Transverse colon (tissue), 4 donors: ENCODE measurements at regions of chr11 and their contacts with region 1.

Region 1: GRCh38 chr11:87037450-87038234 is at the start of gene TMEM135:
- DNase-seq: peak; percentile 98
- H3K4me3 ChIP-seq: peak within 1 kb of the TSS; percentile 71 to 85 (median 79)
- H3K27ac ChIP-seq: peak within 1 kb of the TSS; percentile 89 to 93 (median 91)
- H3K4me1 ChIP-seq: peaks cover 4 to 34% (median 14%) of the 10 kb centered on the region in 4 donors
- H3K27me3 ChIP-seq: no peaks in the 10 kb centered on the region
- CTCF ChIP-seq: no peak
- EP300 ChIP-seq: no peak
- POLR2A ChIP-seq: peak; percentile 75
- total RNA-seq, gene TMEM135: 13.1 to 123 (median 19.1) TPM

Region 2: DNA sequence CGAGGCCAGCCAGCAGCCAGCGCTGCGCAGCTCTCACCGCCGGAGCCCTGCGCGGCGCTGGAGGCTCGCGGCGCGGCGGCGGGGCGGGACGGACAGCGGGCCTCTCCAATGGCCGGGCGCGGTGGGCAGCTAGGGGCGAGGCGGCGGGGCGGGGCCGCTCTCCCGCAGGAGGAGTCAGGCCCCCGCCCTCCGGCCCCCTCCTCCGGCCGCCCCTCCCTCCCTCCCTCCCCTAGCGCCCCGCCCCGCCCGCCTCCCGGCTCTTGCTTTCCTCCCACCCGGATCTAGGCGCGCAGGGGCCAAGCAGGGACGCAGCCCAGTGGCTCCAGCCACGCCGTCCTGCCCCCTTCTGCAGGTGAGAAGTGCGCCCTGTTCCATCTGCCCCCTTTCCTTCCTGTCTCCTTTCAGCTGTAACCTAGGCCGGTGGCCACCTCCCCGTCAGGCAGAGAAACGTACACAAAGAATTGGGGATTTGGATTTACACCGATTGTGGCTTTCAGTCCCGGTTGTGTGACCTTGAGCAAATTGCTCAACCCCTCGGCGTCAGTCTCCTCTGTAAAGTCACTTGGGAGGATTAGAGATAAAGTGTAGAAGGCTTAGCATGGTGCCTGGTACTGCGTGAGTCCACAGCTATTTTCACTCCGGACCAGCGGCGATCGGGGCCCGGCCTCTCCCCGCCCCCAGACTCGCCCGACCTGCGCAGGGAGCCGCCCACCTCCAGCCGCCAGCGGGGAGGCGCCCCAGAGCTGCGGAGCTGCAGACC is 82.1 kb before region 1 on chr11 and contains the start of gene FZD4:
- in situ Hi-C with region 1: no loop called
- intact Hi-C with region 1: loop called (anchors 5 kb)
- DNase-seq: peak; percentile 93
- H3K4me3 ChIP-seq: peak within 1 kb of the TSS; percentile 51 to 99 (median 86)
- H3K27ac ChIP-seq: peak within 1 kb of the TSS; percentile 91 to 98 (median 95)
- H3K4me1 ChIP-seq: peaks cover 6 to 16% (median 15%) of the 10 kb centered on the region in 4 donors
- H3K27me3 ChIP-seq: no peaks in the 10 kb centered on the region
- CTCF ChIP-seq: peak in 4 of 5 experiments; percentile 4 to 23 (median 12)
- EP300 ChIP-seq: no peak
- POLR2A ChIP-seq: peak; percentile 81
- total RNA-seq, gene FZD4: 9.1 to 27.1 (median 18.1) TPM